PC-3 (cell line): ENCODE measurements at regions of chr1 and their contacts with region 1.

Region 1: DNA sequence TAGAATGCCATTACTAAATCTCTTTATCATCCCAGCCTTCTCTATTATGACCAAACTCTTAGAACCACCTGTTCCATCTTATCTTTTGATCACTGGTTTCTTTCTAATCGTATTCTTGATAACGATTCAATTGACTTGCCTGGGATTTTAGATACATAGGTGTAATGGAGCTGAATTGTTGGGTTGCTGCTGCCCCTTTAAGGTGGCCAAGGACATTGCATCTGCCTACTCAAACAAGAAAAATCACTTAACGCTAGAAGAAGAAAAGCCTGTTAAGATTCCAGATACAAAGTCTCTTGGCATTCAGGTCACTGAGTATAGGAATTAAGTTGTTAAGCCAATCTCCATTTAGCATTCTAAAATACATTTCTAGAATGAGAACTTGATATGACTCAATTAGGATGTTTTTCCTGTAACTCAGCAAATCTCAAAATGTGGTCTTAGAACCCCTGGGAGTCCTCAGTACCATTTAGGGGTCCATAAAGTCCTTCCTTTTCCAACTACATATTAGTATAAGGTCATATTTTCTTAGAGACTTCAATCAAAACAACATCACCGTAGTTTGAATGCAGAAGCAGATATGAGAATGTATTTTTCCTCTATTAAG is 12.4 kb downstream of the NEXN start:
- DNase-seq: peak; percentile 69
- ATAC-seq: peak; percentile 85
- H3K4me3 ChIP-seq: no peak overlapping the region
- H3K27ac ChIP-seq: no peak overlapping the region
- H3K4me1 ChIP-seq: peaks cover 10% of the 10 kb centered on the region
- H3K27me3 ChIP-seq: no peaks in the 10 kb centered on the region
- CTCF ChIP-seq: peak; percentile 93

Region 2: DNA sequence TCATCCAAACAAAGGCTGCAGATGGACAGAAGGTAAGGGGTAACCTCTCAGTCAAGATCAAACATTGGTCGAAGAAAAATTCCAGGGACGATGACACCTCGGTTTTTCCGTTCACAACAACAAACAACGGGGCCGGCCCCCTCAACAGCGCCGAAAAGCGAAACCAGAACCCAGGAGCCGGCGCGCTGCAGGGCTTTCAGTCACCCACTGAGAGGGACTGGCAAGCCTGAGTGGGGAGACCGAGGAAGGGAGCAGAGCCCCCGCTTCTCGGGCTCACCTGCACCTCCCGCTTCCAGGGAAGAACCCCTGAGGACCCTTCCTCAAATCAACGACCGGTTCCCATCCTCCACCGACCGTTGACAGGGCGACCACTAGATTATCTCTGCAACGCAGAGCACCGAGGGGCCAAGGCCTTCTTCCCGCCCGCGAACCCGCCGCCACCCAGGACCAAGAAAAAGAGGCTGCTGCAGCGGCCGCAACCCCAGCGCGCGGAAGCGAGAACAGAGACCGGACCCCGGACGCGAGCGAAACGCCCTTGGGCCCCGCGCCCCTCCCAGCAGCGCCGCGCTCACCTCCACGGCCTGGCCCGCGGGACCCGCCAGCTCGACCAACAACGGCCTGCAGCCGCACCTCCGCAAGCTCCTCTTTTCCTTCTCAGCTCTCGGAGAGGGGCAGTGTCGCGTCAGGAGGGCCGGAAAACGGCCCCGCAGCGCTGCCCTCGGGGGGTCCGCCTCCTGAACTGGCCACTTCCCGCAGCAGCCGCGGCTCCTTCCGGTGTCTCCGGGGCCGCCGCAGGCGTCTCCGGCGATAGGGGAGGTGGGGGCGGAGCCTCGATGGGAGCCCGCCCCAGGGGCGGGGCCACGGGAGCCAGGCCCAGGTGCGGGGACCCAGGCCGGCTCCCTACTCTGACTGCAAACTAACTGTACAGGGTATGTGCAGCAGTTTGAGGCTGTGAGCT is 141.4 kb before region 1 on chr1 and contains the start of gene USP33:
- CTCF ChIA-PET with region 1: interaction called, 3 read pairs
- POLR2A ChIA-PET with region 1: no interaction called
- intact Hi-C with region 1: loop called (anchors 5 kb)
- DNase-seq: peak; percentile 93
- ATAC-seq: peak; percentile 84
- H3K4me3 ChIP-seq: peak within 1 kb of the TSS; percentile 81
- H3K27ac ChIP-seq: peak within 1 kb of the TSS; percentile 68
- H3K4me1 ChIP-seq: peaks cover 26% of the 10 kb centered on the region
- H3K27me3 ChIP-seq: no peaks in the 10 kb centered on the region
- CTCF ChIP-seq: no peak
- total RNA-seq, gene USP33: 42.6 and 45.2 TPM in 2 replicates

Region 3: GRCh38 chr1:77872645-77873044 is 28.1 kb before region 1 on chr1:
- CTCF ChIA-PET with region 1: interaction called, 3 read pairs
- POLR2A ChIA-PET with region 1: no interaction called
- intact Hi-C with region 1: loop called (anchors 1 kb)
- DNase-seq: no peak
- ATAC-seq: peak; percentile 9; the same call in 1 of the 2 replicates
- H3K4me3 ChIP-seq: no peak overlapping the region
- H3K27ac ChIP-seq: no peak overlapping the region
- H3K4me1 ChIP-seq: peaks cover 19% of the 10 kb centered on the region
- H3K27me3 ChIP-seq: no peaks in the 10 kb centered on the region
- CTCF ChIP-seq: no peak